Head of caudate nucleus (tissue), 42 donors: ENCODE measurements at regions of chr2 and their contacts with region 1.

Region 1: DNA sequence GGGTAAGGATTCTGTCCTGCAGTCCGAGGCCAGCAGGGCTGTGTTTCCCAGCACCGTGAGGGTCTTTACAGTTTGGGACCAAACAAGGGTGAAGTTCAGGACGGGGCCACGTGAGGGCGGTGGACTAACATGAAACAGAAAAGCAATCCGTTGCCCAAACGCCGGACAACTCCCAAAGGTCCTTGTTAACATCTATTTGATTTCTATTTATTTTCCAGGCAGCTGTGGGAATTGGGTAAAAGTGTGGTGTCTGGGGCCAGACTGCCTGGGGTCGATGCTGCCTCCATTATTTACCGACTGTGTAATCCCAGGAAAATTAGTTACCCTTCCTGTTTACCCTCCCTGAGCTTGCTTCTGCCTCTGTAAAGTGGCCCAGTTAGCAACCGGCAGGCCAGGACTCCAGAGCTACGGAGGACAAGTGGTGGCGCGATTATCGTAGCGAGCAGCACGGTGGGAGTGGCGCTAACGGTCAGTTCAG is 66.3 kb upstream of the TCF7L1 start:
- DNase-seq: peak; percentile 45 to 87 (median 72)

Region 2: GRCh38 chr2:84888401-84889276 is 178.3 kb before region 1 on chr2:
- intact Hi-C with region 1: no loop called
- DNase-seq: peak in 7 of 42 donors; percentile 18 to 54 (median 34)

Region 3: DNA sequence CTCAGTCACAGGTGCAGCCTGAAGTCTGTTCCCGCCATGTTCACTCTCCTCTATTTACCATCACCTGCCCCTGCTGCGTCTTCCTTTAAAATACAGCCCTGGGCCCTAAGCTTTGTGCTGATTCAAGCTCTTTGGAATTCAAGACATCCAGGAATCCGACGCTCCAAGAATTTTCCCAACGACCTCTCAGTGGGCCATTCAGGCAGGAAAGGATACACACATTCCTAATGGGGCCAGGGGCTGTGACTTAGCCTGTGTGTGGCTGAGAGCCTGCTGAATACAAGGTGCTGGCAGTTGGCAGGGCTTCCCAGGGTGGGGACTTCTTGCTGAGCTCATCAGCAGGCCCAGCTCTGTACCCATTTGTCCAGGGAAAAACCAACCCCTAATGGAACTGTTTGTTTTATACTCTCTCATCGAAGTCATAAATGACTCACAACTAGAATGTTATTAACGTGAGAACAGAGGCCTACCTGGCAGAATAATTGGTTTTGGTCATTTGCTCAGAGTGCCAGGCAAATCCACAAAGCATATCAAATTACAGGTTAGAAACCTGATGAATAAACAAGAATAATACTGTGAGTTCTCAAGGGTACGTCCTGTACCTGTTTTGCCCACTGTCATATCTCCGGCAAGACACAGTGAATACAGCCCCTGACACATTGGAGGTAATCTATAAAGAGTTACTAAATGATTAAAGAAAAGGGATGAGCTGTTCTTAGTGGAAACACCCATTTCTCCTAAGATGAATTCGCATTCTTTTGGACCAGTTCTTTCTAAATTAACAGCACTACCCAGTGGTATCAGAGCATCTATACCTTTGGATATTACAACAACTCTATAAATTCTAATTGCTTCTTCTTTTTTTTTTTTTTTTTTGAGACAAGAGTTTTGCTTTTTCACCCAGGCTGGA is 108.5 kb before region 1 on chr2:
- intact Hi-C with region 1: no loop called
- DNase-seq: no peak

Region 4: GRCh38 chr2:85288244-85288725 is 221.4 kb after region 1 on chr2:
- intact Hi-C with region 1: loop called (anchors 5 kb)
- DNase-seq: no peak